Panc1 (cell line): ENCODE measurements at regions of chr3 and their contacts with region 1.

Region 1: DNA sequence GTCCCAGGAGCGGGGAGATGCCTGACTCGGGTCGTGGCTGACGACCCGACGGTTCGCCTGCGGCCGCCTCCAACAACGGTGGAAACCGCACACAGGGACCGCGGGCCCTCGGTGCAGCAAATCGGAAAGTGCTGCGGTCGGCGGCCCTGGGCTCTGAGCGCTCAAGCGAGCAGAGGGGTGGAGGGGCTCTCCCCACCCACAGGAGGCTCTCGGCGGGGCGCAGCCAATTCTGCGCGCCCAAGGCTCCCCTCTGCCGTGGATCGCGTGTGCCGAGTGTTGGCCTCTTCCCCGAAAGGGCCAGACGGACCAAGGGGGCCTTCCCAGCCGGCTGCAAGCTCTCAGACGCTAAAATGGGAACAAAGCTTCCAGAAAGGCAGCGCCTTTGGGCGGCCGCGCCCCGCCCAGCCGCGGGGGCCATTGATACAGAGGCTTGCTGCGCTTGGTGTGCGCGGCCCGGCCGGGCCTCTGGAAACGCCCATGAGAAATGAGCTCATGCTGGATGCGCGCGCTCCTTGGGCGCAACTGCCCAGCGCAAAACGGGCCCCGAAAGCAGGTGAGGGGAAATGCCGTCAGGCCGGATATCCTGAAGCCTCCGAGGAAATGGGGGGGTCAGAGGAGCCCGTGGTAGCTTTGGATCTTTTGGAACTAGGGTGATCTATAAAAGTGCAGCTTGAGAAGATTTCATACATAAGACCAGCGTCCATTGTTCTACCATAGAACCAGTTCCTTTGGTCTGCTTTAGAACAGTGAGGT is 1.2 kb upstream of the GSK3B start:
- DNase-seq: no peak
- ATAC-seq: peak; percentile 67
- H3K4me3 ChIP-seq: peak overlapping the region; percentile 71 to 98
- H3K27ac ChIP-seq: peak overlapping the region; percentile 93
- H3K4me1 ChIP-seq: peaks cover 2% of the 10 kb centered on the region; the same call in 1 of the 2 replicates
- H3K27me3 ChIP-seq: no peaks in the 10 kb centered on the region
- CTCF ChIP-seq: no peak

Region 2: DNA sequence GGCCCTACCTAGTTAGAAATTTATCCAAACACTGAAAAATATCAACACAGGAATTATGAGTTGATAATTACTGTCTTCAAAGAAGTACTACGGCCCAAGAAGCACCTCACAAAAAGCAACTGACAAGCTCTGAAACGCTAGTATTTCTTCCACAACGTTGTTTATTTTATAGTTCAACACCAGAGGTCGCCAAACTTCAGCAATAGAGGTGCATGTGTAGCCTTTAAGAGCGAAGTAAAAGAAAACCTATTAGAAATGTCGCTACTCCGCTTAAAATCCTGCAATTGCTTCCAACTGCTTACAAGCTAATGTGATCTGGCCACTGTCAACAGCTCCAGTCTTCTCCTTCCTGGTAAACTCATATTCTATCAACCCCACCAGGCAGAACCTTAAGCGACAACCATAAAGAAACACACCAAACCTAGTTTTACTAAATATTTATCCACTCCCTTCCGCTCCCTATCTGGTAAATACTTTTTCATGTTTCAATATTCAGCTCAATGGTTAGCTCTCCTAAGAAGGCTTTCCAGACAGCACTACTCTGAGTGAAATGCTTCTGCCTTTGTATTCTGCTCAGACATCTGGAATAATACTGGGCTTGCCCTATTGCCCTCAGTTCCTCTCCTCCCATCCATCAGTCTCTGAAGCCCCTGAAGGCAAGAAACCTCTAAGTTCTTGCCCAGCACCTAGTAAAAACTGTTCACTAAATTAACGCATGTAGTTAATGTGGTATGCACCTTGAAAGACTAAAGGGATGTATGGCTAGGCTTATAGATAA is 203.3 kb before region 1 on chr3:
- CTCF ChIA-PET with region 1: no interaction called
- POLR2A ChIA-PET with region 1: interaction called, 3 read pairs
- in situ Hi-C with region 1: no loop called
- intact Hi-C with region 1: loop called (anchors 10 kb)
- DNase-seq: no peak
- ATAC-seq: 0 out of 2 replicates have a peak, but pooled peaks have one; percentile 53
- H3K4me3 ChIP-seq: no peak overlapping the region
- H3K27ac ChIP-seq: no peak overlapping the region
- H3K4me1 ChIP-seq: no peaks in the 10 kb centered on the region
- H3K27me3 ChIP-seq: no peaks in the 10 kb centered on the region
- CTCF ChIP-seq: peak; percentile 69

Region 3: DNA sequence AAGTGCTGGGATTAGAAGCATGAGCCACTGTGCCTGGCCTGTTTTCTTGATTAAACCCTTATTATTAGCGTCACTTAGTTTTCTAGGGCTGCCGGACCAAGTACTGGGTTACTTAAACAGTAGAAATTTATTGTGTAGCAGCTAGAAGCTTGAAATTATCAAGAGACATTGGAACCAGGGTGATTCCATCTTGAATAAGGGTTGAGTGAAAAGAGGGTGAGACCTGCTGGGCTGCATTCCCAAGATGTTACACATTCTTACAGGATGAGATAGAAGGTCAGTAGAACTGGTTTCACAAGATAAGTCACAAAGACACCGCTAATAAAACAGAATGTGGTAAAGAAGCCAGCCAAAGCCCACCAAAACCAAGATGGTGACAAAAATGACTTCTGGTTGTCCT is 374.0 kb after region 1 on chr3:
- CTCF ChIA-PET with region 1: no interaction called
- POLR2A ChIA-PET with region 1: no interaction called
- in situ Hi-C with region 1: no loop called
- intact Hi-C with region 1: no loop called
- DNase-seq: no peak
- ATAC-seq: no peak
- H3K4me3 ChIP-seq: no peak overlapping the region
- H3K27ac ChIP-seq: no peak overlapping the region
- H3K4me1 ChIP-seq: no peaks in the 10 kb centered on the region
- H3K27me3 ChIP-seq: peaks cover 2% of the 10 kb centered on the region; the same call in 1 of the 2 replicates
- CTCF ChIP-seq: no peak